ENCODE measurements at regions of chr10 and their contacts with region 1.

Region 1: GRCh38 chr10:12656518-12657142 is 307.3 kb downstream of the CAMK1D start:
- DNase-seq: no peak
- ATAC-seq: peak; percentile 60
- H3K4me3 Mint-ChIP-seq: no peak overlapping the region
- H3K27ac Mint-ChIP-seq: no peak overlapping the region
- H3K4me1 Mint-ChIP-seq: peaks cover 13% of the 10 kb centered on the region
- H3K27me3 Mint-ChIP-seq: no peaks in the 10 kb centered on the region
- CTCF ChIP-seq: no peak

Region 2: DNA sequence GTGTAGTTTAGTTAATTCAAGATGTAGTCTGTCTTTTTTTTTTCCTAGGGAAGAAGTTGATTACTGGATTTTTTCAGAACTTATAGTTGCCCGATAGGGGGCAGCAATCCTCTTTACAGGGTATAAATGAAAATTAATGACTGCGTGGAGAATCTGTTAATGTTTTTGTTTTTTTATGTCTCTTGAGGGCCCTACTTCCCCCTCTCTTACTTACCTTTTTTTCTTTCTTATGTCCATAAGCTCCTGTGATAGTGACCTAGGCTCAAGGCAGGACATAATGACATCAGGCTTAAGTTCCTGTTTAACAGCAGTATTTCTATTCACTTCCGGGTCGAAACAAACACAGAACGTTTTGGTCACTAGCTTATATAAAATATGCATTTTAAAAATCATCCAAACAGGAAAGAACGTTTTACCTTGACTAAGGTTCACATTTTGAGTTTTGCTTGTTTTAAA is 441.8 kb before region 1 on chr10:
- CTCF ChIA-PET with region 1: interaction called, 72 read pairs
- POLR2A ChIA-PET with region 1: no interaction called
- intact Hi-C with region 1: loop called (anchors 1 kb)
- DNase-seq: no peak
- ATAC-seq: peak; percentile 42
- H3K4me3 Mint-ChIP-seq: peak overlapping the region; percentile 78
- H3K27ac Mint-ChIP-seq: peak overlapping the region; percentile 88
- H3K4me1 Mint-ChIP-seq: peaks cover 19% of the 10 kb centered on the region
- H3K27me3 Mint-ChIP-seq: no peaks in the 10 kb centered on the region
- CTCF ChIP-seq: peak; percentile 66

Region 3: DNA sequence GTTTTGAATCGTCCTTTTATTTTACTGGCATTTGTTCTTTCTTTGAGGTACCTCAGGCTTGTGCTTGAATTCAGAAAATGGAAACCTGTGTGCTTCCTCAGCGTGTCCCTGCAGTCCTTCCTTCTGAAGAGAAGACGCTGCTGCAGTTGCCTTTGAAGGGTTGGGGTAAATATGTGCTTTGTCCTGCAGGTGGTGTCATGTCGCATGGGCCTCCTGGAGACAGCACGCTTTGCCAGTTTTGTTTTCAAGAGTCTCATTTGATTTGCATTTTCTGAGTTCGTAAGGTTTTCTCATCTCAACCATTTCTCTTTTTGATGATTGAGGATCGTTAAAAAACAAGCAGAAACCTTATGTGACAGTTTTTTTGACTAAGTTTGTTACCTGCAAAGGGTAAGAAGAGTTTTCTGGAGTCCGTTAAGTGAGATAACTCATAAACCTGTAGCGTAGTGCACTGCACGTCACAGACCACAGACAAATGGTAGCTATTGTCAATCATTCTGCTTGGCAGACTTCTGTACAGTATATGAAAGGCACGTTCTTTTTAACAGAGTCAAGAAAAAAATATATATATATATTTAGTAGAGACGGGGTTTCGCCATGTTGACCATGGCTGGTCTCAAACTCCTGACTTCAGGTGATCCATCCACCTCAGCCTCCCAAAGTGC is 403.6 kb before region 1 on chr10:
- CTCF ChIA-PET with region 1: interaction called, 33 read pairs
- POLR2A ChIA-PET with region 1: interaction called, 3 read pairs
- intact Hi-C with region 1: loop called (anchors 1 kb)
- DNase-seq: no peak
- ATAC-seq: peak; percentile 98
- H3K4me3 Mint-ChIP-seq: peak overlapping the region; percentile 55
- H3K27ac Mint-ChIP-seq: peak overlapping the region; percentile 74
- H3K4me1 Mint-ChIP-seq: peaks cover 10% of the 10 kb centered on the region
- H3K27me3 Mint-ChIP-seq: no peaks in the 10 kb centered on the region
- CTCF ChIP-seq: peak; percentile 21

Region 4: GRCh38 chr10:12322583-12323131 is 334.0 kb before region 1 on chr10:
- CTCF ChIA-PET with region 1: interaction called, 9 read pairs
- POLR2A ChIA-PET with region 1: no interaction called
- intact Hi-C with region 1: loop called (anchors 2 kb)
- DNase-seq: no peak
- ATAC-seq: no peak
- H3K4me3 Mint-ChIP-seq: peak overlapping the region; percentile 20
- H3K27ac Mint-ChIP-seq: no peak overlapping the region
- H3K4me1 Mint-ChIP-seq: peaks cover 20% of the 10 kb centered on the region
- H3K27me3 Mint-ChIP-seq: no peaks in the 10 kb centered on the region
- CTCF ChIP-seq: no peak

Region 5: GRCh38 chr10:12448729-12449391 is 207.8 kb before region 1 on chr10:
- CTCF ChIA-PET with region 1: no interaction called
- POLR2A ChIA-PET with region 1: no interaction called
- intact Hi-C with region 1: no loop called
- DNase-seq: no peak
- ATAC-seq: peak; percentile 97
- H3K4me3 Mint-ChIP-seq: peak overlapping the region; percentile 67
- H3K27ac Mint-ChIP-seq: peak overlapping the region; percentile 77
- H3K4me1 Mint-ChIP-seq: peaks cover 66% of the 10 kb centered on the region
- H3K27me3 Mint-ChIP-seq: no peaks in the 10 kb centered on the region
- CTCF ChIP-seq: no peak

Region 6: DNA sequence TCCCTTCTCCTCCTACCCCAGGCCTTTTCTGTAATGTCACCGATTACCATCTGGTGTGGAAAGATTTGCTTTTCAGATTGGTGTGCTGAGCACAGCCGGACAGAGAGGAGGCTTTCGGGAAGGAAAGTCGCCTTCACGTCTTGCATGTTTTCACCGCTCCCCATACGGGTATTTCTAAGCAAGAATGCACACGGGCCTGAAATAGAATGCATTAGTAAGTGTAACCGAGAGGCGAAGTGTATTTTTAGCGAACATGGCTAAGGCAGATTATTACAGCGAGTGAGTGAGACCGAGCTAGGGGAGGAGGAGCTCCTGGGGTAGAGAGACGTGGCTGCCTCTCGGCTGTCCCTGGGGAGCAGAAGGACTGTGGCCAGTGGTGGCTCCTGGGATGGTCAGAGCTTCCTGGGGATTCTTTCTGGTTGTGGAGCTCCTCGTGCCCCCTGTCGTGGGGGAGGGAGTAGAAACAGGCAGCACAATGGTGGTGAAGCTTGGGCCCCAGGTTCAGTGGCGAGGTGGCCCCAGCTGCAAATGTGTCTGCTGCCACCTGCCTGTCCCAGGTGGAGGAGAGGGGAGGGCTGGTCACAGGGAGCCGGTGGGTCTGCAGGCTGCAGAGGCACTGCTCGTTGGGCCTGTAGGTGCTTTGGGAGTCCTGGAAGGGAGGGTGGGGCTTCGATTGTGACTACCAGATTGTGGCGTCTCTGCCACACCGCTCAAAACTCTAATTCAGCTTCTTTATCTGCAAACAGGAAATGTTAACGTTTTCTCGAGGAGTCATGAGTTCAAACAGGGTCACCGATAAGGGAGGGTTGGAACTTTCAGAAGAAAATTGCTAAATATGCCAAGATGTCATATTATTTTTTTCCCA is 171.5 kb before region 1 on chr10:
- CTCF ChIA-PET with region 1: interaction called, 3 read pairs
- POLR2A ChIA-PET with region 1: no interaction called
- intact Hi-C with region 1: loop called (anchors 5 kb)
- DNase-seq: peak; percentile 29
- ATAC-seq: peak; percentile 73
- H3K4me3 Mint-ChIP-seq: peak overlapping the region; percentile 71
- H3K27ac Mint-ChIP-seq: peak overlapping the region; percentile 78
- H3K4me1 Mint-ChIP-seq: peaks cover 63% of the 10 kb centered on the region
- H3K27me3 Mint-ChIP-seq: no peaks in the 10 kb centered on the region
- CTCF ChIP-seq: no peak

Region 7: DNA sequence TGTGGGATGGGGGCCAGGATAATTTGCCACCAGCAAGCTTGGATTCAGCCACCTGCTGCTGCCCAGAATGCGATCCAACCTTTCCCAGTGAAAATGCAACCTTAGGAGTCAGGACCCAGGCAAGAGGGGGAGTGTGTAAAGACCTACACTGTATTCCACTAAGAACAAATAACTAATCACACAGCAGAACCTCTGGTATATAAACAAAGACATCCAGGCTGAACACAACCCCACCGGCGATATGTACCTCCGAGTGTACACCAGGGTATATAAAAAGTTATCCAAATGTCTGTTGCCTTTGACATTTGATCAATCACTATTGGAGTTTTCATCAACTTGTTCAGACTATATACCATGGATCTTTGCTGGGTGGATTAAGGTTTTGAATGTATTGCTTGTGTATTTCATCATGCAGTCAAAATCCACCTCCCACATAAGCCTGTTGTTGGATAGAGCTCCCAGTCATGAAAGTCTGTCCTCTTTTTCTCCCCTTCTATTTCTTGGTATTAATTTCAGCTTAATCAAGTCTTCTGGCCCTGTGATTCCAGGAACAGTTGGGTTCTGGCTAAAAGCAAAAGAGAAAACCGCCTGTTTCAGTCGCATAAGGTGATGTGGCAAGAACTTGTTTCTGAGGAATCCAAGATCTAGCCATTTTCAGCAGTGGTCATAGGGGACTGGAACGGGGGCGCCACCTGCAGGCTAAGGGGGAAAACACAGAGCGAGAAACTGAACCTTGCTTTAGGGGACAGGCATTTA is 54.1 kb after region 1 on chr10:
- CTCF ChIA-PET with region 1: interaction called, 11 read pairs
- POLR2A ChIA-PET with region 1: no interaction called
- intact Hi-C with region 1: loop called (anchors 1 kb)
- DNase-seq: peak; percentile 68
- ATAC-seq: peak; percentile 93
- H3K4me3 Mint-ChIP-seq: no peak overlapping the region
- H3K27ac Mint-ChIP-seq: peak overlapping the region; percentile 54
- H3K4me1 Mint-ChIP-seq: peaks cover 23% of the 10 kb centered on the region
- H3K27me3 Mint-ChIP-seq: no peaks in the 10 kb centered on the region
- CTCF ChIP-seq: no peak

Measured in activated B cell treated with CpG ODN at 0.5 μM for 24 hours (primary cell).